HEK293T (cell line): ENCODE measurements at regions of chr4 and their contacts with region 1.

Region 1: DNA sequence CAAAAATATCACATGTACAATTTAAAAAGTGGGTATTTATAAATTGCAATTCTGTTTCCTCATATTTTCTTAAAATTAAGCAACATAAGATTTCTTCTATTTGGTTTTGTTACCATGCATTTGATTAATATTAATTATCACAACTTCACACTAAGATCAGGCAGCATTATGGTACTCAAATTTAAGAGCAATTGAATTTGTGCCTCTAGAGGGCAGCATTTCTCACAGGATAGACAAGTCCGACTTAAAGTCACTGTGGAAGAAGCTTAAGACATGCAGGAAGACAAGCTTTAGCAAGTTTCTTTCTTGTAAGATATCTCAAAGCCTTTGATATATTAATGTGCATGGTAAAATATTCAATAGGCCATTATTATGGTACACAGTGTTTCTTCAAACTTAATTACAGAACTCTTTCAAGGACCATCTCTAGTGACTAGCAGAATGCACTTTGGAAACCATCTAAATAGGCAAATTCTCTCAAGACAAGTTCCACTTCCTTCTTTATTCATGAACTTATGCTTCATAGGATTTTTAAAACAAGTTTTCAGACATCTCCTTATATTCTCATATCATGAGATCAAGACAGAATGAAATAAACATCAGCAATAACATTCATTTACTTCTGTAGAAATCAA is 35.0 kb downstream of the FBXW7 start:
- DNase-seq: peak; percentile 45

Region 2: DNA sequence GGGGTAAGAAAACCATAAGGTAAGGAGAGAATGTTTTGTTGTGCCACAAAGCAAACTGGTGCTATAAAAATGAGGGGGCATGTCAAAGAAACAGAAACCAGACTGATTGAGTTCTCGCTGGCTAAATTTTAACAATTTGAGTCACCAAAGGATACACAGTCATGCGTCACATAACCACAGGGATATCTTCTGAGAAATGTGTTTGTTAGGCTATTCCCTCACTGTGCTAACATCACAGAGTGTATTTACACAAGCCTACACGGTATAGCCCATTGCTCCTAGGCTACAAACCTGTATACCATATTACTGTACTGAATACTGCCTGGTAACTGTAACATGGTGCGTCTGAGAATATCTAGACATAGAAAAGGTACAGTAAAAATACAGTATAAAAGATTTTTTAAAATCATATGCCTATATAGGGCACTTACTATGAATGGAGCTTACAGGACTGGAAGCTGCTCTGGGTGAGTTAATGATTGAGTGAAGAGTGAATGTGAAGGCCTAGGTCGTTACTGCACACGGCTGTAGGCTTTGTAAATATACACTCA is 15.1 kb before region 1 on chr4:
- CTCF ChIA-PET with region 1: interaction called, 19 read pairs
- POLR2A ChIA-PET with region 1: no interaction called
- DNase-seq: no peak

Region 3: DNA sequence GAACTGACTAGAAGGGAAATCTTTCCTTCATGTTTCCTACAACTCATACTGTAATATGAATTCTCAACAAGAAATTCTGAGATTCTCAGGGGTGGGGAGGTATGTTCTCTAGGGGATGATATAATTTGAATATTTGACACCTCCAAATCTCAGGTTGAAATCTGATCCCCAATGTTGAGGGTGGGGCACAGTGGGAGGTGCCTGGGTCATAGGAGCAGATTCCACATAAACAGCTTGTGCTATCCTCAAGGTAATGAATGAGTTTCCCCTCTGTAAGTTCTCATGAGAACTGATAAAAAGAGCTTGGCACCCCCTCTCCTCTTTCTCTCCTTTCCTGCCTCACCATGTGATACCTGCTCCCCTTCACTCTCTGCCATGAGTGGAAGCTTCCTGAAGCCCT is 13.4 kb after region 1 on chr4:
- CTCF ChIA-PET with region 1: interaction called, 10 read pairs
- POLR2A ChIA-PET with region 1: no interaction called
- DNase-seq: no peak

Region 4: GRCh38 chr4:152640058-152640833 is 139.3 kb after region 1 on chr4:
- CTCF ChIA-PET with region 1: interaction called, 22 read pairs
- POLR2A ChIA-PET with region 1: no interaction called
- DNase-seq: no peak

Region 5: DNA sequence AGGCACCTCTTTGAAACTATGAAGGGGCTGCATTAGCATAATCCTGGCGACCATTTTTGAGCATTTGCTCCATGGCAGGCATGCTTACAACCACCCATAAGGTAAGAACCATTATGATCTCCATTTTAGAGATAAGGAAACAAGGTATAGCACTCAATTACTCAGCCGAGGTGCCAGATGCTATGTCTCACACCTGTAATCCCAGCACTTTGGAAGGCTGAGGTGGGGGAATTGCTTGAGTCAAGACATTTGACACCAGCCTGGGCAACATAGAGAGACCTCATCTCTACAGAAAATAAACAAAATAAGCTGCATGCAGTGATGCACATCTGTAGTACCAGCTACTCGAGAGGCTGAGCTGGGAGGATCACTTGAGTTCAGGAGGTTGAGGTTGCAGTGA is 235.0 kb after region 1 on chr4:
- CTCF ChIA-PET with region 1: interaction called, 12 read pairs
- POLR2A ChIA-PET with region 1: no interaction called
- DNase-seq: no peak